Tibial artery (tissue), 4 donors: ENCODE measurements at regions of chr2 and their contacts with region 1.

Region 1: DNA sequence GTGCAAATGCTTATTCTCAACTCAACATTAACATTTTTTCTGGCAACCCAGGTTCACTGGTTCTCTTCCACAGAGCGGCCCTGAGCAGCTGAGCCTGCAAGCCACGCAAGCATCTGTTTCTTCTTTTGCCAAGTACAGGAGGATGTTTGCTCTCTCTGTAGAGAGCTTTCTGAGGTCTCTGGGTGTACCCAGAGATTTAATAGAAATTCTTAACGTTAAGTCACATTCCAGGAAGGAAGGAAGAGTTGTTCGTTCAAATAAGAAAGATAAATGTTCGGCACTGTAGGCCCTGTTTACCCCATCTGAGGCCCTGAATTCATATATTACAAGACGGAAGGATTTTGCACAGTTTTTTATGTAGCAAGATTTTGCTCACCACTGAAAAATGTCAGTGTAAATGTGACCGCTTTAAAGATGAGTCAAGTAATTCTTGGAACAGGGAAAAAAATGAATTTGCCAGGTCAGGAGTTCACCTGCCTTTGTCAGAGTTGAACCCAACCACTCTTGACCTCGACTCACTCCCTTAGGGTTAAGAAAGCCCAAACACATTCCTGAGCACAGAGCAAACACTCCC is 30.1 kb downstream of the KCTD18 start:
- DNase-seq: no peak
- H3K4me3 ChIP-seq: no peak overlapping the region
- H3K27ac ChIP-seq: no peak overlapping the region
- H3K4me1 ChIP-seq: no peaks in the 10 kb centered on the region
- H3K27me3 ChIP-seq: no peaks in the 10 kb centered on the region
- CTCF ChIP-seq: no peak

Region 2: DNA sequence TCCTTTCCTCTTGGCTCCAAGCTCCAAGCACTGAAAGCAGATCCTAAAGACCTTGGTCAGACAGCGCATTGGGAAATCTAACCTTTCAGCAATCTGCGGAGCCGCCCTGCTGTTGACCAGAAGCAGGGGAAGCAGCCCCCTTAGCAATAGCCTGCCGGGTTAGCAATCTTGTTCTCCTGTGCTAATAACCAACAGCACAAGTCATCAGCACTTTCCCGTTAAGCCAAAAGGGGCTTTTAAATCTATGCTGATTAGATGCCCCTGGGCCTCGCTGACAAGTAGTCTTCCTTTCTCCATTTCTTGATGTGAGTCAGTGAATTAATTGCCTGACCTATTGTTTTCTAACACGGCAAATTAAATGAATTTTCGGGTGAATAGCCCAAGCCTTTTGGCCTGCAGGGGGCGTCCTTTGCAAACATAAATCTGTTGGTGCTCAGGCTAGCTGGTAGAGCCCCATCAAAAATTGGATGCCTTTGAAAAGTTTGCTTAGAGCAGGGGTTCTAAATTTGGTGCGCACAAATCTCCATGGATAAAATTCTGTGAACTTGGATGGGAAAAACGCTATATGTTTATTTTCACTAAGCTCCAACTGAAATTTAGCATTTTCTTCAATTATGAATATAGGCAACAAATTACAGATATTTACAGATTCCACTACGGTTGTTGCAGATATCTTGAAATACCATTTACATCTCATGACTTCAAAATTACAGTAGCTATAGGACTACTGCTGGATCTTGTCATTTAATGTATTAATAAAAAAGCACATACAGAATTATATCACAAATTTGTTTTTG is 499.7 kb before region 1 on chr2:
- intact Hi-C with region 1: loop called (anchors 5 kb)
- DNase-seq: peak; percentile 83 to 89
- H3K4me3 ChIP-seq: peak overlapping the region in 1 of 2 donors; percentile 23
- H3K27ac ChIP-seq: no peak overlapping the region
- H3K4me1 ChIP-seq: peaks cover 0 to 7% (median 3%) of the 10 kb centered on the region in 4 donors
- H3K27me3 ChIP-seq: no peaks in the 10 kb centered on the region
- CTCF ChIP-seq: peak; percentile 75 to 77